CD8-positive, alpha-beta T cell (primary cell): ENCODE measurements at regions of chr6 and their contacts with region 1.

Region 1: DNA sequence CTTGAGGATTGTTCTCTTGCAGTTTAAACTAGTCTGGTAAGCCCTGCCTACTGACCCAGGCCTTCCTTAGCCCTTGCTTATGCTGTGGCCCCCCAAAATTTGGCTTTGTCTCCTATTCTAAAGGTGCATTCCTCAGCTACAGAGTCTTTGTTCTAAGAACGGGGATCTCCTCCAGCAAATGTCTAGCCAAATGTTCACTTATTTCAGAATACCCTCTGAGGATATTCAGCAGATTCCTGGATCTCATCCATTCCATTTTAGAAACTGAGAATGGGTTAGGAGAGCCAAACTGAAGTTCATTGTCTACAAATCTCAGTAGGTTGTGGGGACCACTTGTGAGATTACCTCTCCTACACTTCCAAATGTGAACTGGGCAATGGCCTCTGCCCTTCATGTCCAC is 164.2 kb upstream of the ARG1 start:
- DNase-seq: no peak
- ATAC-seq: no peak
- H3K4me3 ChIP-seq: no peak overlapping the region
- H3K4me3 Mint-ChIP-seq: no peak overlapping the region
- H3K27ac ChIP-seq: no peak overlapping the region
- H3K27ac Mint-ChIP-seq: no peak overlapping the region
- H3K4me1 ChIP-seq: no peaks in the 10 kb centered on the region
- H3K4me1 Mint-ChIP-seq: no peaks in the 10 kb centered on the region
- H3K27me3 ChIP-seq: no peaks in the 10 kb centered on the region
- H3K27me3 Mint-ChIP-seq: no peaks in the 10 kb centered on the region
- CTCF ChIP-seq: no peak

Region 2: GRCh38 chr6:131379948-131380347 is 28.9 kb before region 1 on chr6:
- CTCF ChIA-PET with region 1: no interaction called
- POLR2A ChIA-PET with region 1: no interaction called
- intact Hi-C with region 1: loop called in 1 of 2 experiments (anchors 1 kb)
- DNase-seq: no peak
- ATAC-seq: no peak
- H3K4me3 ChIP-seq: no peak overlapping the region
- H3K4me3 Mint-ChIP-seq: no peak overlapping the region
- H3K27ac ChIP-seq: no peak overlapping the region
- H3K27ac Mint-ChIP-seq: no peak overlapping the region
- H3K4me1 ChIP-seq: no peaks in the 10 kb centered on the region
- H3K4me1 Mint-ChIP-seq: peaks cover 6% of the 10 kb centered on the region
- H3K27me3 ChIP-seq: no peaks in the 10 kb centered on the region
- H3K27me3 Mint-ChIP-seq: no peaks in the 10 kb centered on the region
- CTCF ChIP-seq: no peak